Activated CD4-positive, alpha-beta T cell treated with anti-CD3 and anti-CD28 coated beads, Interleukin-2, amount 10 ng/mL, durations not matched to agents 24 days and 14 days (primary cell): ENCODE measurements at regions of chr22 and their contacts with region 1.

Region 1: GRCh38 chr22:36546092-36546804 is 17.3 kb upstream of the EIF3D start:
- DNase-seq: peak; percentile 80
- H3K4me3 Mint-ChIP-seq: no peak overlapping the region
- H3K27ac Mint-ChIP-seq: no peak overlapping the region
- H3K4me1 Mint-ChIP-seq: peaks cover 32% of the 10 kb centered on the region
- H3K27me3 Mint-ChIP-seq: peaks cover 5% of the 10 kb centered on the region

Region 2: GRCh38 chr22:36454916-36455570 is 91.2 kb before region 1 on chr22:
- intact Hi-C with region 1: no loop called
- DNase-seq: peak; percentile 98
- H3K4me3 Mint-ChIP-seq: peak overlapping the region; percentile 71
- H3K27ac Mint-ChIP-seq: peak overlapping the region; percentile 77
- H3K4me1 Mint-ChIP-seq: peaks cover 41% of the 10 kb centered on the region
- H3K27me3 Mint-ChIP-seq: no peaks in the 10 kb centered on the region

Region 3: DNA sequence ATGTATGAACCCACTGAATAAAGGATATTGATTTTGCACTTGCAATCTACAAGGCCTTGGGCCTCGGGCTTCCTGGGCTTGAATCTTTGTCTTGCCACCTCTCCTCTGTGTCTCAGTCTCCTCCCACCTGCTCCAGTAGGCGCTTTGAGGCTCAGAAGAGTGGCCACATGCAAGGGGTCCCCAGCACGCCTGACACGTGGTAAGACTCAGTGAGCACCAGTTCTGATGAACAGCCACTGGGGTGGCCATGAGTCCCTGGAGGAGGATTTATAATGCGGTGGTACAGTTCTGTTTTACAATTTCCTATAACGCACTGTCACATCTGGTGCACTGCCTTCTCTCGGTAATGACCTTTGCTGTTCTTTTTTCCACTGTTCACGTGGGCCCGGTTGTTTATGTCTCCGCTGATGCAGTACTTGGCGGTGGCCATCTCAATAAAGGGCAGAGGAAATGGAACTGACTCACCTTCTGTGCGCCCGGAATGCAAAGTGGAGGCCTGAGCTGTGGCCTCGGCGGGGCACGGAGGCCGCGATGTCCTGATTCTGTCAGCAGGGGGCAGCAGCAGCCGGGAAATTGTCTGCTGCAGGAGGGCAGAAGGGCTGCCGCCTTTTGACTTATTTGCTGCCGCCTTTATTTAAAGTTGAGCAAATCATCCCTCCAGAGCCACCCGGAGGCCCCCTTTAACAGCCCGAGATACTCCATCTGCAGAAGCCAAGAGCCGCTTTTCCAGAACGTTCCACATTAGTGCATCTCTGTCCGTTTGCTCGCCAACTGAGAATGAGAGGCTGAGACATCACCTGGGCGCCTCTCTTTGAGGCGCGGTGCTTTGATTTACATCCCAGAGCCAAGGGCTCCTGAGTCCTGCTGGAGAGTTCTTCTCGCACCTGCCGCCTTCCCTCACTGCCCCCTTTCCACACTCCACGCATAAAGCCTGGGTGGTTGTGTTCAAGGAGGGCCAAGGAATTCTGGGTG is 235.7 kb after region 1 on chr22:
- intact Hi-C with region 1: loop called (anchors 5 kb)
- DNase-seq: peak; percentile 97
- H3K4me3 Mint-ChIP-seq: peak overlapping the region; percentile 63
- H3K27ac Mint-ChIP-seq: peak overlapping the region; percentile 95
- H3K4me1 Mint-ChIP-seq: peaks cover 27% of the 10 kb centered on the region
- H3K27me3 Mint-ChIP-seq: peaks cover 1% of the 10 kb centered on the region

Region 4: GRCh38 chr22:36856121-36856791 is 310.0 kb after region 1 on chr22:
- intact Hi-C with region 1: loop called (anchors 1 kb)
- DNase-seq: peak; percentile 99
- H3K4me3 Mint-ChIP-seq: peak overlapping the region; percentile 70
- H3K27ac Mint-ChIP-seq: peak overlapping the region; percentile 57
- H3K4me1 Mint-ChIP-seq: peaks cover 42% of the 10 kb centered on the region
- H3K27me3 Mint-ChIP-seq: no peaks in the 10 kb centered on the region

Region 5: GRCh38 chr22:37043828-37044538 is 497.7 kb after region 1 on chr22:
- intact Hi-C with region 1: loop called (anchors 10 kb)
- DNase-seq: peak; percentile 86
- H3K4me3 Mint-ChIP-seq: no peak overlapping the region
- H3K27ac Mint-ChIP-seq: no peak overlapping the region
- H3K4me1 Mint-ChIP-seq: peaks cover 25% of the 10 kb centered on the region
- H3K27me3 Mint-ChIP-seq: no peaks in the 10 kb centered on the region